ENCODE measurements at regions of chr2 and their contacts with region 1.

Region 1: DNA sequence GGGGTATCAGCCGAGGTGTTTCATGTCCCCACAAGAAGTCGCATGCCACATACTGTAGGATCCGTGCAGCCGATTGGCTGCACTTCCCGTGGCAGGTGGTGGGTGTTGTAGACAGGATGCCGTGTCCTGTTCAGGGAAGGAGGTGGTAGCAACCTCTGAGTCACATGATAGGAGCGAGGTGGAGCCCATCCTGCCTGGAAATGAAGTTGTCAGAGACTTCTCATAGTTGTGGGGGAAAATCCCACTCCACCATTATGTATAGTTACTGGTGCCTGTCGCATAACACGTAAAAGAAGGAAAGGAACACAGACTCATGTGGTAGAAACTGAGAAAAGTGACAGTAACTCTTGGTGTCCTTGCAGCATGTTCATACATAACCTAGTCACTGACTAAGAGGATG is 91.4 kb upstream of the IL1R2 start:
- DNase-seq: no peak
- H3K4me3 ChIP-seq: no peak overlapping the region
- H3K27ac ChIP-seq: no peak overlapping the region
- H3K4me1 ChIP-seq: no peaks in the 10 kb centered on the region
- H3K27me3 ChIP-seq: peaks cover 0 to 2% (median 0%) of the 10 kb centered on the region in 5 experiments

Region 2: DNA sequence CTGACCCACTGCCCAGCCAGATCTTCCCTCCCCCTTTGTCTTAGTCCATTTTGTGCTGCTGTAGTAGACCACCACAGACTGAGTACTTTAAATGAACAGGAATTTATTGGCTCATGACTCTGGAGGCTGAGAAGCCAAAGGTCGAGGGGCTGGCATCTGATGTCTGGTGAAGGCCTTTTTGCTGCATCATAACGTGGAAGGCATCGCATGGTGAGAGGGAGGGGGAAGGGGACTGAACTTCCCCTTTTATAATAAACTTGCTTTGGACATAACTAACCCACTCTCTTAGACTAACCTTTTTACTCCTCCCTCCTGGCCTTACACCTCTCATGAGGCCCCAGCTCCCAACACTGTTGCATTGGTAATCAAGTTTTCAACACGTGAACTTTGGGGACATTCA is 119.0 kb before region 1 on chr2:
- CTCF ChIA-PET with region 1: no interaction called
- POLR2A ChIA-PET with region 1: no interaction called
- DNase-seq: peak; percentile 73 to 93 (median 91)
- H3K4me3 ChIP-seq: no peak overlapping the region
- H3K27ac ChIP-seq: peak overlapping the region in 1 of 2 experiments; percentile 32
- H3K4me1 ChIP-seq: peaks cover 11 to 30% (median 13%) of the 10 kb centered on the region in 4 experiments
- H3K27me3 ChIP-seq: no peaks in the 10 kb centered on the region

Region 3: DNA sequence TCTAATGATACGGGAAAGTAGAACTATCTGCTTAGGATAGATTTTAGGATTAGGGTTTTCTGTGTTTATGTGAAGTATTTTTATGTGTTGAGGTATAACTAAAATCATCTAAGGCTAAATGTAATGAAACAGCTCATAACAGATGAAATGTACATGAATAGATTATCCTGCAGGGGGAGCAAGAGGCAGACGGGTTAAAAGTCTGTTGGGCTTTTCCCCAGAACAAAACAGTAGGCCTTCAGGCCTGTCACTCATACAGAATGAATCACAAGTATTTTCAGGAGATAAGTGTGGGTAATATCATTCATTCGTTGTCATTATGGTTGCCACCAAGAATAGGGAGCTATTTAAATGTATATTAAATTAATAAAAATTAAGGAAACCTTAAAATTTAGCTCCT is 16.5 kb before region 1 on chr2:
- CTCF ChIA-PET with region 1: interaction called, 16 read pairs
- POLR2A ChIA-PET with region 1: no interaction called
- DNase-seq: peak; percentile 50 to 76 (median 69)
- H3K4me3 ChIP-seq: no peak overlapping the region
- H3K27ac ChIP-seq: no peak overlapping the region
- H3K4me1 ChIP-seq: peaks cover 0 to 5% (median 0%) of the 10 kb centered on the region in 4 experiments
- H3K27me3 ChIP-seq: no peaks in the 10 kb centered on the region

Region 4: GRCh38 chr2:101921319-101921952 is 21.1 kb after region 1 on chr2:
- CTCF ChIA-PET with region 1: no interaction called
- POLR2A ChIA-PET with region 1: no interaction called
- DNase-seq: peak; percentile 42 to 91 (median 88)
- H3K4me3 ChIP-seq: no peak overlapping the region
- H3K27ac ChIP-seq: peak overlapping the region in 1 of 2 experiments; percentile 30
- H3K4me1 ChIP-seq: peaks cover 0 to 12% (median 7%) of the 10 kb centered on the region in 4 experiments
- H3K27me3 ChIP-seq: no peaks in the 10 kb centered on the region

Region 5: GRCh38 chr2:102190430-102191107 is 290.2 kb after region 1 on chr2:
- CTCF ChIA-PET with region 1: no interaction called
- POLR2A ChIA-PET with region 1: no interaction called
- DNase-seq: no peak
- H3K4me3 ChIP-seq: no peak overlapping the region
- H3K27ac ChIP-seq: no peak overlapping the region
- H3K4me1 ChIP-seq: peaks cover 0 to 9% (median 4%) of the 10 kb centered on the region in 4 experiments
- H3K27me3 ChIP-seq: peaks cover 0 to 14% (median 0%) of the 10 kb centered on the region in 5 experiments

Measured in common myeloid progenitor, CD34-positive (primary cell).